Activated T-helper 2 cell treated with anti-CD3 and anti-CD28 coated beads, Interferon-gamma antibody, Interleukin-2, Interleukin-4, amounts not matched to agents 10 μg/mL and 5 μg/mL and 100 μg/mL, durations not matched to agents 14 hours and 24 hours and 36 hours (primary cell): ENCODE measurements at regions of chr14 and their contacts with region 1.

Region 1: GRCh38 chr14:100375963-100376735 is 53.0 kb downstream of the SLC25A47 start:
- DNase-seq: peak; percentile 92
- H3K4me3 Mint-ChIP-seq: peak within 1 kb of the TSS; percentile 95
- H3K27ac Mint-ChIP-seq: peak within 1 kb of the TSS; percentile 99
- H3K4me1 Mint-ChIP-seq: peaks cover 45% of the 10 kb centered on the region
- H3K27me3 Mint-ChIP-seq: no peaks in the 10 kb centered on the region

Region 2: DNA sequence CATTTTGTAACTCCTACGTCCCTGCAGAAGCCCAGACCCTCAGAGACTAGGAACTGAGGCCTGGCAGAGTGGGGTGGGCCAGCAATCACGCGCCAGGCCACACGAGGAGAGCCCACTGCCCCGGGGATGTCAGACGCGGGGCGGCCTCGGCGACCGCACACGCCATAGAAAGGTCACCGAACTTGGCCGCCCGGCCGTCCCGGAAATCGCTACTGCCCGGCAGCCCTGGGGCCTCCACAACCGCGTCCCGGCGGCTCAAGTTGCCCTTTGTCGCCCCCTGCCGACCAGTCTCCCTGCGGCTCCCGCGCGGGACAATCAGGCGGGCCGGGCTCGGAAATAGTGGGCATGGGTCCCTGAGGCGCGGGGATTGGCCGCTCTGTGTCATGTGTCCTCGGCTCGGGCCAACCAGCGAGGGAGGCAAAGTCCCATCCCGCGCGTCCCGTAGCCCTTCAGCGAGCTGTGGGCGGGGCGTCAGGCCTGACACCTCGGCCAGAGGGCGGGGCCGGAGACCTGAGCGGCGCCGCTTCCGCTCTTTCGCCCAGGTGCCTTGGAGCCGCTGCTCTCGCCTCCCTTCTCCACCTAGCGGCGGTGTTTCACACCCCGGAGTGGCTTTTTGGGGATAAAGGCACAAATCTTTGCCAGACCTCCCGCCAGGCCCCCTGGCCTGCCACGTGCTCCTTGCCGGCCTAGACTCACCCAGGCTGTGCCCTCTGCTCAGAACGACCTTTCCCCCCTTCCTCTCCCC is 183.3 kb before region 1 on chr14:
- intact Hi-C with region 1: loop called (anchors 1 kb)
- DNase-seq: peak; percentile 100
- H3K4me3 Mint-ChIP-seq: peak overlapping the region; percentile 64
- H3K27ac Mint-ChIP-seq: peak overlapping the region; percentile 84
- H3K4me1 Mint-ChIP-seq: peaks cover 9% of the 10 kb centered on the region
- H3K27me3 Mint-ChIP-seq: no peaks in the 10 kb centered on the region

Region 3: DNA sequence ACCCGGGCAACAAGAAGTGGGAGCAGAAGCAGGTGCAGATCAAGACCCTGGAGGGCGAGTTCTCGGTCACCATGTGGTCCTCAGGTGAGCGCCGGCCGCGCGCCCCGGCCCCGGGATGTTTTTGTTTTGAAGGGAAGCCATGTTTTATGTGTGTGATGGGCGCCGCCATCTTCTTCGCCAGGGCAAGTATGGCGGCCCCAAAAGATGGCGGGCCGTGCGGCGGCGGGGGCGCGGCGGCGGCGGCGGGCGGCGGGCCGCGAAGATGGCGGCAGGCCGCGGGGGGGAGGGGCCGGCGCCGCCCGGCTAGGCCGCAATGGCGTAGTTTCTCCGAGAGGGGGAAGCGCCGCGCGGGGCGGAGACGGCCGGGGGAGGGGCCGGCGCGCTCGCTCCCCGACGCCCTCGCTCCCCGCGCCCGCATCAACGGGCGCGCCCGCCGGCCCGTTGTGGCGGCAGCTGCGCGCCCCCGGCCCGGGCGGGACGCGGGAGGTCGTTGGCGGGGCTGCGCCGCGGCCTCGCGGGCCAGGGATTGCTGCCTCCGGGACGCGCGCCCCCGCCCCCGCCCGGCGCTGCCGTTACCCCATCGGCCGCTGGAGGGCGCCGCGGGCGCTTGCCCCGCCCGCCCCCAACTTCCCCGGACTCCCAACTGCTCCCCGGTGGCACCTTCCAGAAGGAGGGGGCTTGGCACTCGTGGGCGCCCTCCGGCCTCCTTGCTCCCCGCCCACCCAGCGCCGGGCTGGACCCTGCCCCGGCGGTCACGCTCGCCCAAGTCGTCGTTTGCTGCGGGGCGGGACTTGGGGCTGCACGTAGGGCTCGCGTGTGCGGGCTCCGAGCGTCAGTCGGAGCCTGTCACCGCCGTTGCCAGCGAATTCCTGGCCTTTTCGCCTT is 136.1 kb before region 1 on chr14:
- intact Hi-C with region 1: loop called (anchors 2 kb)
- DNase-seq: peak; percentile 83
- H3K4me3 Mint-ChIP-seq: peak overlapping the region; percentile 87
- H3K27ac Mint-ChIP-seq: peak overlapping the region; percentile 83
- H3K4me1 Mint-ChIP-seq: peaks cover 48% of the 10 kb centered on the region
- H3K27me3 Mint-ChIP-seq: no peaks in the 10 kb centered on the region

Region 4: DNA sequence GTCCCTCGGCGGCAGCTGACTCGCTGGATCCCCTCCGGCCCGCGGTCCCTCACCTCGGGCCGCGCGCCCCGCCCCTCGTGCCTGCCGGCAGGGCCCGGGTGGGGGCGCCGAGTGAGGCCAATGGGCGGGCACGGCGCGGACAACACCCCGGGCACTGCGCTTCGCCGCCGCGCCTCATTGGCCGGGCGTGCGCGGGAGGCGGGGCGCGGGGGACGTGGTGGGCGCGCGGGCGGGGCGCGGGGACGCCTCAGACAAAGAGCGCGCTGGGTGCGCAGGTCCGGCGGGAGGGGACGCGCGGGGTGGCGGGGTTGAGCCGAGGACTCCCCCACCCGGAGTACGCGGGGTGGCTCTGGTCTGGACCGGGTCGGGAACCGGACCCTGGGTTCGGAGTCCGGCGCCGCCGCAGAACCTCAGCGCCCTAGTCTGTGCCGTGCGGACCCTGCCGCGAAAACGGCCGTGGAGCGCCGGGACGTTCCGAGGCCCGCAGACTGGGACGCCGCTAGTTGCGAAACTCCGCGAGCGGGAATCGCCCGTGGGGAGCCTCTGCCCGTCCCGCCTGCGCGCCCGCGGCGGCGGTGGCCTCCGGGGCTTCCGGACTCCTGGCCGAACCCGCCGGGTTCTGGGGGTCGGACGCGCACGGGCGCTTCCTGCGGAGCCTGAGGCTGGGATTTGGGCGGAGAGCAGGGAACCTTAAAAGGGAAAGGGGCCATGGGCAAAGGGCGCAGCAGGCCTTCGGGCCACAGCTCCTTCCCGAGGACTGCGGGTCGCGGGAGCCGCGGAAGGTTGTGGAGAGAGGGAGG is 69.5 kb before region 1 on chr14 and contains the start of gene SLC25A29:
- intact Hi-C with region 1: loop called (anchors 2 kb)
- DNase-seq: peak; percentile 69
- H3K4me3 Mint-ChIP-seq: peak within 1 kb of the TSS; percentile 82
- H3K27ac Mint-ChIP-seq: no peak within 1 kb of the TSS
- H3K4me1 Mint-ChIP-seq: peaks cover 20% of the 10 kb centered on the region
- H3K27me3 Mint-ChIP-seq: peaks cover 17% of the 10 kb centered on the region
- total RNA-seq, gene SLC25A29: 37.0 and 38.8 TPM in 2 replicates

Region 5: DNA sequence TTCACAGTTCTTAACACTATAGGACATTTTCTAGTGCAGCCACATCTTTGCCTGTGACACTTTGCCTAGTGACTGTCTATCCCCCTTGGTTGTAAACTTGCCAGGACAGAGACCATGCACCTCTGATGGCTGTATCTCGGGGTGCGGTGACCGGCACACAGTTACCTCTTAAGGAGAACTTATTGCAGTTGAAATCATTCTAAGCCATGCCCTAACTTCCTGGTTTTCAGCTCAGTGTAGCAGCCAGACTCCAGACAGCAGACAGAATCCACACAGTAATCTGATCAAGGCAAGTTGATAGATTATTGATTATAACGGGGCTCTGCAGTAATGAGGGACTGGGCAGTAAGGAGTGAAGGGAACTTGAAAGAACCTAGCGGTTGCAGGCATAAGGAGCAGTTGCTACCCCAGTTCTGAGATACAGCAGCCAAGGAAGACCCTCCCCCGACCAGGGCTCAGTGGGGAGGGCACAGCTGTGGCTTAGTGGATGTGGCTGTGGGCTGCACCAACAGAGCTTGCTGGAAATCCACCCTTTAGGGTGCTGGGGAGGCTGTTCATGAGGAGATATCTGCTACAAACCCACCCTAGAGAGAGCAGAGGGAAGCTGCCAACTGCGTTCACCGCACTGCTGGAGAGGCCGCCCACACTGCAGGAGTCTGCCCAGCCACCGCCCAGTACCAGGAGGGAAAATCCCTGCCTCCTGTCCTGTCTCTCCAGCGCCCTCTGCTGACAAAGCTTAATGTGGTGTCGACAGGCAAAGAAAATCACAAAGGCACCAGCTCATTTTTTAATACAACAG is 269.2 kb after region 1 on chr14:
- intact Hi-C with region 1: loop called (anchors 1 kb)
- DNase-seq: peak; percentile 81
- H3K4me3 Mint-ChIP-seq: peak overlapping the region; percentile 34
- H3K27ac Mint-ChIP-seq: peak overlapping the region; percentile 20
- H3K4me1 Mint-ChIP-seq: peaks cover 45% of the 10 kb centered on the region
- H3K27me3 Mint-ChIP-seq: peaks cover 9% of the 10 kb centered on the region

Region 6: GRCh38 chr14:100802766-100803165 is 426.6 kb after region 1 on chr14:
- intact Hi-C with region 1: no loop called
- DNase-seq: no peak
- H3K4me3 Mint-ChIP-seq: no peak overlapping the region
- H3K27ac Mint-ChIP-seq: no peak overlapping the region
- H3K4me1 Mint-ChIP-seq: no peaks in the 10 kb centered on the region
- H3K27me3 Mint-ChIP-seq: peaks cover 2% of the 10 kb centered on the region